ENCODE measurements at regions of chr2 and their contacts with region 1.

Region 1: DNA sequence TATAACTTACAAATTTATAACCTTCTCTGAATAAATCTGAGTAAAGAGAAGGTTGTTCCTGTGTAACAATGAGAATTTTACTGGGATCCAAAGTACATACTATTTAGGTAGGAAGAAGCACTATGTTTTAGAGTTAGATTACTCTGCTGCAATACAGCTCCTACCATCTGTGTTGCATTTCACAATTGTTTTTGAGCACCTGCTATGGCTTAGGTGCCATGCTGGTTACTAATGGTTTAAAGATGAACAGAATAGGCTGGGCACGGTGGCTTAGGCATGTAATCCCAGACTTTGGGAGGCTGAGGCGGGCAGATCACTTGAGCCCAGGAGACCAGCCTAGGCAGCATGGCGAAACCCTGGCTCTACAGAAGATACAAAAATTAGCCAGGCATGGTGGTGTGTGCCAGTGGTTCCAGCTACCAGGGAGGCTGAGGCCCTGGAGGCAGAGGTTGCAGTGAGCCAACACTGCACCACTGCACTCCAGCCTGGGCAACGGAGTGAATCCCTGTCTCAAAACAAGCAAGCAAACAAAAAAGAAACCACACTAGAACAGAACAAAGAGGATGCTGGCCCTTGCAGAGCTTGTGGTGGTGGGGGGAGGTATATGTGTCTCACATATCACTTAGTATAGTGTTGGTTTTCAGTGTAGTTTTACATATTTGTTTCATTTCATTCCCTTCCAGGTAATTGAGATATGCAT is 56.7 kb downstream of the SPTBN1 start:
- DNase-seq: no peak
- H3K4me3 ChIP-seq: no peak overlapping the region
- H3K4me3 Mint-ChIP-seq: no peak overlapping the region
- H3K27ac ChIP-seq: no peak overlapping the region
- H3K27ac Mint-ChIP-seq: no peak overlapping the region
- H3K4me1 ChIP-seq: no peaks in the 10 kb centered on the region
- H3K4me1 Mint-ChIP-seq: no peaks in the 10 kb centered on the region
- H3K27me3 ChIP-seq: no peaks in the 10 kb centered on the region
- H3K27me3 Mint-ChIP-seq: no peaks in the 10 kb centered on the region
- CTCF ChIP-seq: no peak

Region 2: DNA sequence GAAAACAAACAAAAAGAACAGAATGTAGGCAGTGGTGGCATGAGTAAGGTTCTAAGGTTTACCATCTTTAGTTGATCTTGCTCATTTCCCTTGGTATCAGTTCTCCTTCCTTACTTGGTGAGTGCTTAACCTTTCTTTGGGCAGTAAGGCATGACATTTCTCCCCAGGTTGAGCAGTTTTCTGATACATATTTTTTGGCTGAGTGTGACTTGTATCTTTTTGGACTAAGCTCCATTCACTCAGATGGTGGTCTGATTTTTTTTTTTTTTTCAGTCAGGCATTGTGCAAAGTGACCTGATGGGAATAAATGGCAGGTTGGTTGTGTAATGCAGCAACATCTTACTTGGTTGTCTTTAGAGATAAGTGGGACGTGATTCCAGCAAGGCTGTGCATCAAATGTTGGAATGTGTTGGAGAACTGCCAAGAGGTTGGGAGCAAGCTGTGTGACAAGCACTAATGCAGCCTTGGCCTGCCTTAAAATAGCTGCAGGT is 41.5 kb before region 1 on chr2:
- intact Hi-C with region 1: no loop called
- DNase-seq: no peak
- H3K4me3 ChIP-seq: no peak overlapping the region
- H3K4me3 Mint-ChIP-seq: no peak overlapping the region
- H3K27ac ChIP-seq: no peak overlapping the region
- H3K27ac Mint-ChIP-seq: no peak overlapping the region
- H3K4me1 ChIP-seq: no peaks in the 10 kb centered on the region
- H3K4me1 Mint-ChIP-seq: no peaks in the 10 kb centered on the region
- H3K27me3 ChIP-seq: no peaks in the 10 kb centered on the region
- H3K27me3 Mint-ChIP-seq: peaks cover 2 to 3% (median 2%) of the 10 kb centered on the region in 3 donors
- CTCF ChIP-seq: no peak

Region 3: GRCh38 chr2:54665436-54665856 is 152.6 kb after region 1 on chr2:
- intact Hi-C with region 1: no loop called
- DNase-seq: peak; percentile 41 to 63 (median 58)
- H3K4me3 ChIP-seq: no peak overlapping the region
- H3K4me3 Mint-ChIP-seq: no peak overlapping the region
- H3K27ac ChIP-seq: no peak overlapping the region
- H3K27ac Mint-ChIP-seq: peak overlapping the region in 1 of 7 donors; percentile 21
- H3K4me1 ChIP-seq: peaks cover 35% of the 10 kb centered on the region in 2 donors
- H3K4me1 Mint-ChIP-seq: peaks cover 38% of the 10 kb centered on the region
- H3K27me3 ChIP-seq: no peaks in the 10 kb centered on the region
- H3K27me3 Mint-ChIP-seq: peaks cover 0 to 2% (median 0%) of the 10 kb centered on the region in 3 donors
- CTCF ChIP-seq: peak; percentile 81

Region 4: GRCh38 chr2:54838585-54839035 is 325.8 kb after region 1 on chr2:
- intact Hi-C with region 1: loop called in 1 of 2 experiments (anchors 10 kb)
- DNase-seq: peak; percentile 30 to 49 (median 44)
- H3K4me3 ChIP-seq: no peak overlapping the region
- H3K4me3 Mint-ChIP-seq: no peak overlapping the region
- H3K27ac ChIP-seq: no peak overlapping the region
- H3K27ac Mint-ChIP-seq: no peak overlapping the region
- H3K4me1 ChIP-seq: no peaks in the 10 kb centered on the region
- H3K4me1 Mint-ChIP-seq: peaks cover 4% of the 10 kb centered on the region
- H3K27me3 ChIP-seq: no peaks in the 10 kb centered on the region
- H3K27me3 Mint-ChIP-seq: no peaks in the 10 kb centered on the region
- CTCF ChIP-seq: peak; percentile 88

Measured in CD14-positive monocyte (primary cell).